ENCODE measurements at regions of chr11 and their contacts with region 1.

Region 1: GRCh38 chr11:63032457-63032856 is 16.8 kb upstream of the SLC22A8 start:
- DNase-seq: no peak
- ATAC-seq: no peak
- H3K4me3 ChIP-seq: no peak overlapping the region
- H3K4me3 Mint-ChIP-seq: no peak overlapping the region
- H3K27ac ChIP-seq: no peak overlapping the region
- H3K27ac Mint-ChIP-seq: no peak overlapping the region
- H3K4me1 ChIP-seq: no peaks in the 10 kb centered on the region
- H3K4me1 Mint-ChIP-seq: peaks cover 0 to 6% (median 0%) of the 10 kb centered on the region in 7 donors
- H3K27me3 ChIP-seq: no peaks in the 10 kb centered on the region
- H3K27me3 Mint-ChIP-seq: peaks cover 15 to 27% (median 21%) of the 10 kb centered on the region in 5 donors

Region 2: DNA sequence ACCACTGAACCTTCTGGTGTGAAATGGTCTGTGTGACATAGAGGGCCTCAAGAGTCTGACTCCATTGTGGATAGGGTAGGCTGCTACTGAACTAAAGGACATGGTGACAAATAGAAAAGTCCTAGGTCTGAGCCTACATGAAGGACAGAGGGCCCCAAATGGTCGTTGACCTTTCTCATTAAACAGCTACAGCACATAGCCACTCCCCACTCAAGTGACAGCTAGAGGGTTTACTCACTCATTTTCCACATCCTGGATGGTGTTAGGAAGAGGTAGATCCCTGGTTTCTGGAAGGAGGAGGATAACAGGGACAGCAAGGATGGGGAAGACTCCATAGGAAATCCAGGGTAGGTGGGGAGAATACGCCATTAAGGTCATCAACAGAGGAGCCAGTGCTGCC is 48.2 kb after region 1 on chr11:
- CTCF ChIA-PET with region 1: no interaction called
- POLR2A ChIA-PET with region 1: no interaction called
- intact Hi-C with region 1: no loop called
- DNase-seq: no peak
- ATAC-seq: no peak
- H3K4me3 ChIP-seq: no peak overlapping the region
- H3K4me3 Mint-ChIP-seq: no peak overlapping the region
- H3K27ac ChIP-seq: no peak overlapping the region
- H3K27ac Mint-ChIP-seq: no peak overlapping the region
- H3K4me1 ChIP-seq: no peaks in the 10 kb centered on the region
- H3K4me1 Mint-ChIP-seq: no peaks in the 10 kb centered on the region
- H3K27me3 ChIP-seq: no peaks in the 10 kb centered on the region
- H3K27me3 Mint-ChIP-seq: peaks cover 10 to 63% (median 58%) of the 10 kb centered on the region in 5 donors

Region 3: DNA sequence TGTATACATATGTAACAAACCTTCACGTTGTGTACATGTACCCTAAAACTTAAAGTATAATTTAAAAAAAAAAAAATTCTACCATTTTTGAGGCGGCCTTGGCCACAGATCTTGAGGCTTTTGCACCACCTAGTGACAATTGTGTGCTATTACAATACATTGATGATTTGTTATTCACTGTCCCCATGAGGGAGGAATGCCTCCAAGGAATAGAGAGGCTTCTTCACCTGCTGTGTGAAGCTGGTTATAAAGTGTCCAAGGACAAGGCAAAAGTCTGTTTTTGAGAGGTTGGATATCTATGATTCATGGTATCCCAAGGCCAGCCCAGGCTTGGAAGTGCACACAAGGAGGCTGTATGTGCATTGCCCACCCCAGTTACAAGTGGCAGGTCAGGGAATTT is 180.3 kb after region 1 on chr11:
- CTCF ChIA-PET with region 1: no interaction called
- POLR2A ChIA-PET with region 1: no interaction called
- intact Hi-C with region 1: loop called in 1 of 2 experiments (anchors 2 kb)
- DNase-seq: peak in 6 of 9 donors; percentile 15 to 41 (median 21)
- ATAC-seq: no peak
- H3K4me3 ChIP-seq: no peak overlapping the region
- H3K4me3 Mint-ChIP-seq: no peak overlapping the region
- H3K27ac ChIP-seq: no peak overlapping the region
- H3K27ac Mint-ChIP-seq: no peak overlapping the region
- H3K4me1 ChIP-seq: no peaks in the 10 kb centered on the region
- H3K4me1 Mint-ChIP-seq: peaks cover 0 to 8% (median 0%) of the 10 kb centered on the region in 7 donors
- H3K27me3 ChIP-seq: no peaks in the 10 kb centered on the region
- H3K27me3 Mint-ChIP-seq: peaks cover 6 to 46% (median 16%) of the 10 kb centered on the region in 5 donors

Region 4: GRCh38 chr11:63738720-63739360 is 706.4 kb after region 1 on chr11:
- CTCF ChIA-PET with region 1: no interaction called
- POLR2A ChIA-PET with region 1: no interaction called
- intact Hi-C with region 1: loop called in 1 of 2 experiments (anchors 2 kb)
- DNase-seq: peak in 8 of 9 donors; percentile 23 to 64 (median 46)
- ATAC-seq: peak; percentile 70
- H3K4me3 ChIP-seq: no peak overlapping the region
- H3K4me3 Mint-ChIP-seq: no peak overlapping the region
- H3K27ac ChIP-seq: no peak overlapping the region
- H3K27ac Mint-ChIP-seq: peak overlapping the region in 3 of 9 donors; percentile 29 to 67 (median 45)
- H3K4me1 ChIP-seq: no peaks in the 10 kb centered on the region
- H3K4me1 Mint-ChIP-seq: peaks cover 3 to 8% (median 4%) of the 10 kb centered on the region in 7 donors
- H3K27me3 ChIP-seq: no peaks in the 10 kb centered on the region
- H3K27me3 Mint-ChIP-seq: no peaks in the 10 kb centered on the region

Measured in naive thymus-derived CD4-positive, alpha-beta T cell (primary cell).